ENCODE measurements at regions of chr2 and their contacts with region 1.

Region 1: GRCh38 chr2:9770308-9771100 is 72.8 kb upstream of the TAF1B start:
- DNase-seq: peak; percentile 82 to 91
- ATAC-seq: peak; percentile 67 to 85
- H3K4me3 ChIP-seq: no peak overlapping the region
- H3K27ac ChIP-seq: peak overlapping the region; percentile 54 to 79; a peak in 5 of 6 replicates
- H3K4me1 ChIP-seq: peaks cover 25% of the 10 kb centered on the region
- CTCF ChIP-seq: peak; percentile 82
- EP300 ChIP-seq: no peak
- POLR2A ChIP-seq: no peak
- RAD21 ChIP-seq: peak; percentile 72 to 75

Region 2: DNA sequence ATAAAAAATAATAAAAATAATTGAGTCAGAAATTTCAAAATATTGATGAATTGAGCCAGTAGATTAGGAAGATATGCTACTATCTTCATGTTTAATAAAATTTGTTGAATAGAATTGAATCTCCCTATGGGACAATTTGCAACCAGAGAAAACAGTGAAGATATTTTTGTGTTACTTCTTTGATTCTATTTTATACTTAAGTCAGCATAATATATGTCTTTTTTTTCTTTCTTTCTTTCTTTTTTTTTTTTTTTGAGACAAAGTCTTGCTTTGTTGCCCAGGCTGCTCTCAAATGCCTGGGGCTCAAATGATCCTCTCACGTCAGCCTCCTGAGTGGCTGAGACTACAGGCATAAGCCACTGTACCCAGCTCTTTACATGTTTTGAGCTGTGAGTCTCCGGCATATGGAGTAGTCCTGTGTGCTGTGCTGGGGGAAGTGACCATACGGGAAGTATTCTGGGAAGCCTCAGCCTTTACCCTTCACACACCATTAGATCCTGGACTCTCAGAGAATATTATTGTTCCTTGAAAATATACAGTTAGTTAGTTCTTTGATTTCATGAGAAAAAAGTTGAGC is 310.0 kb before region 1 on chr2:
- CTCF ChIA-PET with region 1: no interaction called
- POLR2A ChIA-PET with region 1: no interaction called
- DNase-seq: no peak
- ATAC-seq: no peak
- H3K4me3 ChIP-seq: no peak overlapping the region
- H3K27ac ChIP-seq: no peak overlapping the region
- H3K4me1 ChIP-seq: no peaks in the 10 kb centered on the region
- CTCF ChIP-seq: no peak
- EP300 ChIP-seq: no peak
- POLR2A ChIP-seq: no peak
- RAD21 ChIP-seq: no peak

Region 3: DNA sequence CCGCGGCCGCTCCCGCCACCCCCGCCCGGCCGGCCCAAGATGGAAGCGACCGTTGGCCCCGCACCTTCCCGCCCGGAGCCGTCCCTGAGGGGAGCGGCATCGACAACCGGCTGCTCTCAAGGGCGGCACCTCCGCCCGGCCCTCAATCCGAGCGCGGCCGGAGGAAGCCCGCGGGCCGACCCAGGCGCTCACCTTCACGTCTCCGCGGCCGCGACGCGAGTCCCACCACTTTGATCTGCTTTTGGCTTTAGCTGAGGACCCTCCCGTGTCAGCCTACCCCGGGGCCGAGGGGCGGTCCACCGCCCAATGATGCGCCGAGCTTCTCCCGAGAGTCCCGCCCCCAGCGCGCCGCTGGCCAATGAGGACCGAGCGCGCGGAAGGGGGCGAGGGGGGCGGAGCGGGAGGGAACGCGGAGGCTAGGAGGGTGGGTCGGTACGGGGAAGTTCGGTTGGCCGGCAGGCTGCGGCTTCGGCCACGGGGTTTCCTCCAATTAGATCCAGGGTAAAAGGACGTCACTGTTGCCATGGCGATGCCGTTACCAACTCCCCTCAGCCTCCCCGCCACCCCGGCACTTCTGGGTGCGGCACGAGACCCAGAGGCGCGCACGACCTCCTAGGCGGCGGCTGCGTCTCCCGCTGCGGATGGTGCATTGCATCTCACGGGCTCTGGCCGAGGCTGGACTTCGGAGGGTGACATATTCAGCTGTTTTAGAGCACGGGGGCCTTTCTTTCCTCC is 139.6 kb before region 1 on chr2 and contains the start of gene YWHAQ:
- CTCF ChIA-PET with region 1: interaction called, 53 read pairs
- POLR2A ChIA-PET with region 1: interaction called, 21 read pairs
- DNase-seq: peak; percentile 99
- ATAC-seq: peak; percentile 88 to 94
- H3K4me3 ChIP-seq: peak within 1 kb of the TSS; percentile 93
- H3K27ac ChIP-seq: peak within 1 kb of the TSS; percentile 96 to 97
- H3K4me1 ChIP-seq: peaks cover 40% of the 10 kb centered on the region
- CTCF ChIP-seq: no peak
- EP300 ChIP-seq: no peak
- POLR2A ChIP-seq: peak; percentile 98
- RAD21 ChIP-seq: peak; percentile 22 to 40; a peak in 3 of 5 replicates
- polyA plus RNA-seq, gene YWHAQ: 672 and 833 TPM in 2 replicates

Region 4: GRCh38 chr2:9656270-9656766 is 114.2 kb before region 1 on chr2:
- CTCF ChIA-PET with region 1: interaction called, 16 read pairs
- POLR2A ChIA-PET with region 1: no interaction called
- DNase-seq: peak; percentile 90 to 95
- ATAC-seq: peak; percentile 91 to 94
- H3K4me3 ChIP-seq: no peak overlapping the region
- H3K27ac ChIP-seq: peak overlapping the region; percentile 84 to 86
- H3K4me1 ChIP-seq: peaks cover 50% of the 10 kb centered on the region
- CTCF ChIP-seq: no peak
- EP300 ChIP-seq: peak in 1 of 2 experiments; percentile 60; a peak in 1 of 5 replicates
- POLR2A ChIP-seq: no peak
- RAD21 ChIP-seq: peak; percentile 41 to 43

Region 5: DNA sequence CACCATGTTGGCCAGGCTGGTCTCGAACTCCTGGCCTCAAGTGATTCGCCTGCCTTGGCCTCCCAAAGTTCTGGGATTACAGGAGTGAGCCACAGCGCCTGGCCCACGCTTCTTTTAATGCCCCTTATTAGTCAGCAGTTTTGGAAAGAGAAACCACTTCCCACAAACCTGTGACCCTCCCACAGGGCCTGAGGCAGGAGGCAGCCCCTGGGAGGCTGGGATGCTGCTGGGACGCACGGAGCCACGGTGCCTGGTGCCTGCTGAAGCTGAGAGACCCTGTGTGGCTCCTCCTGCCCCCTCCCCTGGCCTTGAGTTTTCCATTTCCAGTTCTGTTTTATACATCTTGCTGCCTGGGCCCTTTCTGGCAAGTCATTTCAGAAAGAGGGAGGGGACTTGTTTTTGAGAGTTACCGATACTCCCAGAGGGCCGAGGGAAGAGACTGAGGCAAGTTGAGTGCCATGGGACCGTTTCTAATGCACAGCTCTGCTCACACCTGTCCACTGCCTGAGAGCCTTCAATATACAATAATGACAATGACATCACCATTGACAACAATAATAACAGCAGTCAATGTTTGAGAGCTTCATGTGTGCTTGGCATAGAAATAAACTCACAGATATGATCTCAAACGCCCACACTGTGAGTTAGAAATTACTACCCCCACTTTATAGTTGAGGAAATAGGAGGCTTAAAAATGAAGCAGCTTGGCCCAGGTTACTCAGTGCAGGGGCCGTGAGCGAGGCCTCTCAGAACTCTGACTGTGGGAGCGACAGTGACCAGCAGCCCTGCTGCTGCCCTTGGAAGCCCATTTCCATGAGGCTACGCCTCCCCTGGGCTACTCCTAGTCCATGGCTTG is 61.6 kb before region 1 on chr2:
- CTCF ChIA-PET with region 1: interaction called, 27 read pairs
- POLR2A ChIA-PET with region 1: no interaction called
- DNase-seq: no peak
- ATAC-seq: no peak
- H3K4me3 ChIP-seq: no peak overlapping the region
- H3K27ac ChIP-seq: peak overlapping the region in 1 of 2 experiments; percentile 35; a peak in 3 of 6 replicates
- H3K4me1 ChIP-seq: peaks cover 11% of the 10 kb centered on the region
- CTCF ChIP-seq: no peak
- EP300 ChIP-seq: no peak
- POLR2A ChIP-seq: no peak
- RAD21 ChIP-seq: no peak

Region 6: DNA sequence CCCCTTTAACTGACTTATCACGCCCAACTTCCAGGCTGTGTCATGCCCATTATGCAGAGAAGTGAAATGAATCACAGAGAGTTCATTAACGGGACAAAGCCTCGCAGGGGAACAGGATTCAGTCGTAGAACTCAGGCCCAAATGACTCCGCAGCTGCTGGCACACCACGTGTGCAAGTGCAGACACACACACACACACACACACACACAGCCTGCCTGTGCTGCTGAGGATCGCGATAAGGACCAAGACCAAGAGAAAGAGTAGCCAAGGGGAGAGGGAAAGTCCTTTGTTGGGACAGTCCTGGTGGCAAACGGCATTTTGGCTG is 17.3 kb before region 1 on chr2:
- CTCF ChIA-PET with region 1: interaction called, 234 read pairs
- POLR2A ChIA-PET with region 1: no interaction called
- DNase-seq: peak; percentile 88 to 92
- ATAC-seq: peak; percentile 81 to 91
- H3K4me3 ChIP-seq: peak overlapping the region; percentile 35
- H3K27ac ChIP-seq: peak overlapping the region; percentile 87 to 93
- H3K4me1 ChIP-seq: peaks cover 48% of the 10 kb centered on the region
- CTCF ChIP-seq: no peak
- EP300 ChIP-seq: no peak
- POLR2A ChIP-seq: peak; percentile 30; the same call in 1 of the 2 replicates
- RAD21 ChIP-seq: no peak; a peak in 1 of 5 replicates

Region 7: GRCh38 chr2:9967053-9967775 is 196.7 kb after region 1 on chr2:
- CTCF ChIA-PET with region 1: no interaction called
- POLR2A ChIA-PET with region 1: no interaction called
- DNase-seq: no peak
- ATAC-seq: no peak
- H3K4me3 ChIP-seq: no peak overlapping the region
- H3K27ac ChIP-seq: no peak overlapping the region
- H3K4me1 ChIP-seq: no peaks in the 10 kb centered on the region
- CTCF ChIP-seq: no peak
- EP300 ChIP-seq: no peak
- POLR2A ChIP-seq: no peak
- RAD21 ChIP-seq: no peak

Region 8: DNA sequence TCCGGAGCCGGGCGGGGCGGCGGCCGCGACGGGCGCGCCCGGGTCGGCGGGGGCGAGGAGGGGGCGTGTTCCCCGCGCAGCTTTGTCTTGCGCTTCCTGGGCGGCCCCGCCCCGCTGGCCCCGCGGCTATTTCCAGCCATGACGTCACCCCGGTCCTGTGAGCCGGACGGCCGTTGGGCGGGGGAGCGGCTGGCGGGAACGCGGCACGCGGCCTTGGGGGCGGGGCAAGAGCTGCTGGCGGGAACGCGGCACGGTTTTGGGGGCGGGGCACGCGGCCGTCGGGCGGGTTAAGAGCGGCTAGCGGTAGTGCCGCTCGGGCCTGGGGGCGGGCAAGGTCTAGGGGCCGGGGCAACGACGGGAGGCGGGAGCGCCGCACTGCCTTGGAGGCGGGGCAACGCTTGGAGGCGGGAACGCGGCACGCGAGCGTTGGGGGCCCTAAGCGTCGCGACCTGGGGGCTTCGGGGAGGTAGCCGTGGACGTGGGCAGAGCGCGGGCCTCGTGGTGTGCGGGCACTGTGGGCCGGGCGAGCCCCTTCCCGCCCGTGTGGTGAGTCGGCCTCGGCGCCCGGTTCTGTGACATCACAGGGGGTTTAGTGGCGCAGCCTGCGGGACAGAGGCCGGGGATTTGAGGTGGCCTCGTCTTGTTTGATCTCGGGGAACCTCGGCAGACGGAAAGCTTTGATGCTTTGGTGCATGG is 273.6 kb after region 1 on chr2:
- CTCF ChIA-PET with region 1: interaction called, 22 read pairs
- POLR2A ChIA-PET with region 1: no interaction called
- DNase-seq: peak; percentile 79 to 93
- ATAC-seq: peak; percentile 48 to 61
- H3K4me3 ChIP-seq: peak overlapping the region; percentile 89
- H3K27ac ChIP-seq: peak overlapping the region; percentile 87 to 90
- H3K4me1 ChIP-seq: no peaks in the 10 kb centered on the region; the same call in 2 of the 3 replicates
- CTCF ChIP-seq: no peak
- EP300 ChIP-seq: no peak
- POLR2A ChIP-seq: no peak
- RAD21 ChIP-seq: no peak

Measured in A549 (cell line).